OCI-LY7 (cell line): ENCODE measurements at regions of chr2 and their contacts with region 1.

Region 1: DNA sequence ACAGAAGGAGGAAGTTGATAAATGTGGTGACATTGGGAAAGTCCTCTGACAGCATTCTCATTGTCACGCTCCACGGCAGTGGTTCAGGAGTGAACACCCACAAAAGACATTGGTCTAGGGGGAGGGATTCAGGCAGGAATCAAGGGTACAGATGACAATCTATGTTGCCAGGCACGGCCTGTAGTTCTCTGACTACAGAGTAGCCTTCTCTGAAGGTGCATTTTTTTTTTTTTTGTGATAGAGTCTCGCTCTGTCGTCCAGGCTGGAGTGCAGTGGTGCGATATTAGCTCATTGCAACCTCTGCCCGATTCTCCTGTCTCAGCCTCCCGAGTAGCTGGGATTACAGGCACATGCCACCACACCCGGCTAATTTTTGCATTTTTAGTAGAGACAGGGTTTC is 7.4 kb upstream of the MOB1A start:
- DNase-seq: peak; percentile 75
- H3K4me3 ChIP-seq: peak overlapping the region; percentile 45
- H3K27ac ChIP-seq: peak overlapping the region; percentile 79
- H3K4me1 ChIP-seq: peaks cover 68% of the 10 kb centered on the region
- CTCF ChIP-seq: no peak

Region 2: DNA sequence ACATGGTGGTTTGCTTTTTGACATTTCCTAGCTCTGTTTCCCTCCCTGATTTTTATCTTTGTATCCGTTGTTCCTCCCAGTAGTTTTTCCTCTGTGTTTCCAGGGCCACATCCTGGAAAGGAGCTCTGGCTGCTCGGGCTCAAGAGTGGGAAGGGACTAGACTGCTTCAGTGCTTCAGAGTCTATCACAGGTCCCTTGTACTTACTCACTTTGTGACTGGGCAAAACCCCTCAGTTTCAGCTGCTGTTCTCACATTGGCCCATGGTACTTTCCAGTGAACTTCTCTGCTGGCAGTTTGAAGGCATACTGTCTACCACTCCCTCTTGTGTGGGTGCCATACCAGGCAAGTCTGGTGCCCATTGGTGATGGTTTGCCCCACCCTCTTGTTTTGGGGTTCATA is 364.8 kb before region 1 on chr2:
- CTCF ChIA-PET with region 1: no interaction called
- POLR2A ChIA-PET with region 1: no interaction called
- intact Hi-C with region 1: no loop called
- DNase-seq: no peak
- H3K4me3 ChIP-seq: no peak overlapping the region
- H3K27ac ChIP-seq: no peak overlapping the region
- H3K4me1 ChIP-seq: peaks cover 16% of the 10 kb centered on the region
- CTCF ChIP-seq: no peak

Region 3: DNA sequence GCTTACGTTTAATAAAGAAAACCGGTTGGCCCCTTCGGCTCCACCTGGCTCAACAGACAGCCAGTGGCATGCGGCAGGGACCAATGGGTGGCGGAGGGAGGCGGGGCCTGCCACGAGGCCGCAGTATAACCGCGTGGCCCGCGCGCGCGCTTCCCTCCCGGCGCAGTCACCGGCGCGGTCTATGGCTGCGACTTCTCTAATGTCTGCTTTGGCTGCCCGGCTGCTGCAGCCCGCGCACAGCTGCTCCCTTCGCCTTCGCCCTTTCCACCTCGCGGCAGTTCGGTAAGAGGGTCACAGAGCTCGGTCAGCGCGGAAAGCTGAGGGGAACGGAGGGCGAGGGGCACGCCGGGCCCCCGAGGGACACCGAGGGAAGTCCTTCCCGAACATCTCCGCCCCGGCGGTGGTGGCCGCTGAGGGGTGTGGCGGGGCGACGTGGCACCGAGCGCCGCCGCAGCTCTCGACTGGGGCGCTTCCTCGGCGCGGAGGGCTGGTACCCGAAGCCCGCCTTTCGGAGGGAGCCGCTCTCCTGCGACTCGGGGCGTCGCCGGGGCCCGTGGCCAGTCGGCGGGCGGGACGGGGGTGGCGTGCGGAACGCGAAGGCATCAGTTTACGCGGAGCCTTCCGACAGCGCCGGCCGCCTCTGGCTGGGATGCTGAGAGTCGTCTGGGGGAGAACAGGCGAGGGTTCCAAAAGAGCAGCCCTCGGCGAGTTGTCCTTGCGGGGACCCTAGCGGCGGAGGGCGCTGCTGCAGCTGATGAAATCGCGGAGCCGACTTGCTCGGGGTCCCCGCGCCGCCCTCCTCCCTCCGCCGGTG is 12.6 kb after region 1 on chr2 and contains the start of gene MTHFD2:
- CTCF ChIA-PET with region 1: no interaction called
- POLR2A ChIA-PET with region 1: interaction called, 118 read pairs
- intact Hi-C with region 1: loop called (anchors 1 kb)
- DNase-seq: peak; percentile 99
- H3K4me3 ChIP-seq: peak within 1 kb of the TSS; percentile 84
- H3K27ac ChIP-seq: peak within 1 kb of the TSS; percentile 88
- H3K4me1 ChIP-seq: peaks cover 49% of the 10 kb centered on the region
- CTCF ChIP-seq: peak; percentile 81
- total RNA-seq, gene MTHFD2: 220 and 250 TPM in 2 replicates